ENCODE measurements at regions of chrX and their contacts with region 1.

Region 1: GRCh38 chrX:85288992-85289723 is 45.4 kb downstream of the ZNF711 start:
- DNase-seq: no peak
- H3K4me3 ChIP-seq: no peak overlapping the region
- H3K27ac ChIP-seq: no peak overlapping the region
- H3K4me1 ChIP-seq: no peaks in the 10 kb centered on the region
- H3K27me3 ChIP-seq: no peaks in the 10 kb centered on the region
- CTCF ChIP-seq: peak; percentile 8 to 12

Region 2: GRCh38 chrX:85244450-85245211 is 44.5 kb before region 1 on chrX:
- CTCF ChIA-PET with region 1: no interaction called
- dilution Hi-C with region 1: loop called (anchors 5 kb)
- in situ Hi-C with region 1: no loop called
- intact Hi-C with region 1: no loop called
- DNase-seq: peak; percentile 2
- H3K4me3 ChIP-seq: peak overlapping the region; percentile 2 to 46 (median 38)
- H3K27ac ChIP-seq: no peak overlapping the region
- H3K4me1 ChIP-seq: no peaks in the 10 kb centered on the region
- H3K27me3 ChIP-seq: peaks cover 3% of the 10 kb centered on the region
- CTCF ChIP-seq: no peak

Region 3: DNA sequence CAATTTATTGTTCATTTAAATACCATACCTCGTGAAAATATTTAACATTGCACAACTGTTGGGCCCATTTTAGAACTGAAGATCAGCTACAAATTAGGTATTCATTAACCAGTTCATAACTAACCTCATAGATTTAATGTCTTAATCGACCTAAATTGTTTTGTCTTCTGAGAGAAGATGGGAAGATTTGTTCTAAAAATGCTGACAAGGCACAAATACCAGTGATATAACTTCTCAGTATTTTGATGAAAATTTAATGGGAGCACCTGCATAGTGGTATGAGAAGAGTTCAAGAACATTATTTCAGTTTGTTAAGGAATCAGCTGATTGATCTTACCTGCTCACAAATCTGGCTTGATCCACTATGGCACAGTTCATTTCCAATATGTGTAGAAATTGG is 56.4 kb after region 1 on chrX:
- CTCF ChIA-PET with region 1: no interaction called
- dilution Hi-C with region 1: no loop called
- in situ Hi-C with region 1: no loop called
- intact Hi-C with region 1: no loop called
- DNase-seq: no peak
- H3K4me3 ChIP-seq: no peak overlapping the region
- H3K27ac ChIP-seq: no peak overlapping the region
- H3K4me1 ChIP-seq: no peaks in the 10 kb centered on the region
- H3K27me3 ChIP-seq: peaks cover 2% of the 10 kb centered on the region
- CTCF ChIP-seq: no peak

Measured in mammary epithelial cell (primary cell).